ENCODE measurements at regions of chr17 and their contacts with region 1.

Region 1: DNA sequence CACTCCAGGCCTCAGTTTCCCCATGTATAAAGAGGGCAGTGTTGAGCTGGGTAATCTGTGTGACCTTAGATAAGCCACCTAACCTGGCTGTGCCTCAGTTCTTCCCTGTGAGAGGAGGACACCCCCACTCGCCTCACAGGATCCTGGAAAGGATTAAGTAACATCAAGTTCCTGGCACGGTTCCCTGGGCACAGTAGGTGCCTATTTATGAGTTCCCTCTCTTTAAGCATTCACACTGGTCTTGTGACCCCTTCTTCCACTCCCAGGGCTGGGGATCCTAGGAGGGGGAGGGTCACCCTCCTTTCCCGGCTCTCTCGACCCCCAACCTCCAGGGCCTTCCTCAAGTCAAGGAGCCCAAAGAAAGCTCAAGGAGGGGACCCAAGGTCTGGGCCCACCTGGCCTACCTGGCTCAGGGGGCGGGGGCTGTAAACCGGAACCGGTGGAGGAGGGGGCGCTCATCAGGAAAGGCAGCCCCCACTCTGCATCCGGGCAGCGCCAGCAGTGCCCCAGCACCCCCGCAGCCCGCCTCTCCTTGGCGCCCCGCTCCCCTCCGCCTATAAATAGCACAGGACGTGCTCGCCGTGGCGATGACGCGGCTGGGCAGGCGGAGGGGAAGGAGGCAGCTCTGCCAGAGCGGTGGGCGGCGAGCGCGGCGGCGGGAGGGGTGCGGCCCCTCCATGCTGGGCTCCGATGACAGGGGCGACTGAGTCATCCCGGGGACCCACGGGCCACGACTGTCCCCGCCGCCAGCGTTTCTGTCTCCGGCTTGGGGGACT is 9.4 kb downstream of the RPL19 start:
- DNase-seq: peak in 1 of 2 experiments; percentile 76
- H3K4me3 ChIP-seq: peak overlapping the region; percentile 27 to 62 (median 50)
- H3K27ac ChIP-seq: no peak overlapping the region
- H3K4me1 ChIP-seq: peaks cover 5 to 32% (median 24%) of the 10 kb centered on the region in 4 experiments
- H3K27me3 ChIP-seq: peaks cover 0 to 4% (median 2%) of the 10 kb centered on the region in 4 experiments; a peak in 3 of 7 replicates
- CTCF ChIP-seq: no peak
- EP300 ChIP-seq: no peak
- POLR2A ChIP-seq: 0 out of 3 replicates have a peak, but pooled peaks of 1 of the 2 experiments have one; percentile 50
- RAD21 ChIP-seq: no peak

Region 2: GRCh38 chr17:39194089-39194984 is 15.2 kb before region 1 on chr17:
- CTCF ChIA-PET with region 1: interaction called, 13 read pairs
- POLR2A ChIA-PET with region 1: interaction called, 51 read pairs
- DNase-seq: peak in 1 of 2 experiments; percentile 65
- H3K4me3 ChIP-seq: peak overlapping the region in 2 of 4 experiments; percentile 8 to 89; a peak in 4 of 8 replicates
- H3K27ac ChIP-seq: 0 out of 2 replicates have a peak overlapping the region, but pooled peaks have one; percentile 32
- H3K4me1 ChIP-seq: peaks cover 4 to 27% (median 22%) of the 10 kb centered on the region in 4 experiments
- H3K27me3 ChIP-seq: no peaks in the 10 kb centered on the region
- CTCF ChIP-seq: peak; percentile 34 to 58 (median 57)
- EP300 ChIP-seq: no peak
- POLR2A ChIP-seq: no peak
- RAD21 ChIP-seq: peak in 1 of 2 experiments; percentile 36; a peak in 1 of 4 replicates

Region 3: GRCh38 chr17:39219647-39220154 is 10.2 kb after region 1 on chr17:
- CTCF ChIA-PET with region 1: interaction called, 27 read pairs
- POLR2A ChIA-PET with region 1: interaction called, 92 read pairs
- DNase-seq: no peak
- H3K4me3 ChIP-seq: no peak overlapping the region
- H3K27ac ChIP-seq: no peak overlapping the region
- H3K4me1 ChIP-seq: peaks cover 0 to 15% (median 9%) of the 10 kb centered on the region in 4 experiments; a peak in 5 of 7 replicates
- H3K27me3 ChIP-seq: peaks cover 6 to 35% (median 27%) of the 10 kb centered on the region in 4 experiments
- CTCF ChIP-seq: no peak
- EP300 ChIP-seq: no peak
- POLR2A ChIP-seq: no peak
- RAD21 ChIP-seq: no peak

Region 4: DNA sequence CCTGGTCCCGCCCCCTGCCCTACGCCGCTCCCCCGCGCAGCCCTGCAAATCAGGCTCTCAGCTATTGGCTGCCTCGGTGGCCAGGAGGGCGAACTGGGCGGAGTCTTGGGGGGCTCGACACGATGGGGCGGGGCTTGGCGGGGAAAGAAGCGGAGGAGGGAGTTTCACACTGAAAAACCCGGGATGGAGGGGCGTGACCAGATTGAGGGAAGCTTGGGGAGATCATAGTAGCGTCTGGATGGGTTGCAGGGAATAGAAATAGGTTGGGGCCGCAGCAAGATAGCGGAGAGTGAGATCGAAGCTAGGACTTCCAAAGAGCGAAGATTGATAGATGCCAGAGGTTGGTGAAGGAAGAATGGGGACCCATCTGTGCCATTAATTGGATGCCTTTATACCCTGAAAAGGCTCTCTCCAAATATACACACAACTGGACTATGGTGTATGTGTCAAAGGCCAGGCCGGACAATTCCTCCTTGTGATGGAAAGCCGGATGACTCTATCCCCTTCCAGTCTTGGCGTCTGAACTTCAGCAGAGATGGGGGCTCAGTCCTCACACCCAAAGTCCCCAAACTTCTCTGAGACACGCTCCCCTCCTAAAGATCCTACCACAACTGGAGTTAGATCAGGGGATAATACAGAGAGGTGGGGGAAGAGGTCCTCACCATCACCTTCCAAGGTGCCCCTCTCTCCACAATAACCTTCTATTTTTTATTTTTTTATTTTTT is 16.6 kb after region 1 on chr17:
- CTCF ChIA-PET with region 1: interaction called, 982 read pairs
- POLR2A ChIA-PET with region 1: interaction called, 92 read pairs
- DNase-seq: peak; percentile 81 to 98
- H3K4me3 ChIP-seq: peak overlapping the region in 3 of 4 experiments; percentile 11 to 73 (median 31); a peak in 5 of 8 replicates
- H3K27ac ChIP-seq: no peak overlapping the region
- H3K4me1 ChIP-seq: peaks cover 0 to 16% (median 7%) of the 10 kb centered on the region in 4 experiments; a peak in 6 of 7 replicates
- H3K27me3 ChIP-seq: peaks cover 13 to 30% (median 26%) of the 10 kb centered on the region in 4 experiments; a peak in 6 of 7 replicates
- CTCF ChIP-seq: no peak
- EP300 ChIP-seq: no peak
- POLR2A ChIP-seq: no peak
- RAD21 ChIP-seq: no peak

Region 5: DNA sequence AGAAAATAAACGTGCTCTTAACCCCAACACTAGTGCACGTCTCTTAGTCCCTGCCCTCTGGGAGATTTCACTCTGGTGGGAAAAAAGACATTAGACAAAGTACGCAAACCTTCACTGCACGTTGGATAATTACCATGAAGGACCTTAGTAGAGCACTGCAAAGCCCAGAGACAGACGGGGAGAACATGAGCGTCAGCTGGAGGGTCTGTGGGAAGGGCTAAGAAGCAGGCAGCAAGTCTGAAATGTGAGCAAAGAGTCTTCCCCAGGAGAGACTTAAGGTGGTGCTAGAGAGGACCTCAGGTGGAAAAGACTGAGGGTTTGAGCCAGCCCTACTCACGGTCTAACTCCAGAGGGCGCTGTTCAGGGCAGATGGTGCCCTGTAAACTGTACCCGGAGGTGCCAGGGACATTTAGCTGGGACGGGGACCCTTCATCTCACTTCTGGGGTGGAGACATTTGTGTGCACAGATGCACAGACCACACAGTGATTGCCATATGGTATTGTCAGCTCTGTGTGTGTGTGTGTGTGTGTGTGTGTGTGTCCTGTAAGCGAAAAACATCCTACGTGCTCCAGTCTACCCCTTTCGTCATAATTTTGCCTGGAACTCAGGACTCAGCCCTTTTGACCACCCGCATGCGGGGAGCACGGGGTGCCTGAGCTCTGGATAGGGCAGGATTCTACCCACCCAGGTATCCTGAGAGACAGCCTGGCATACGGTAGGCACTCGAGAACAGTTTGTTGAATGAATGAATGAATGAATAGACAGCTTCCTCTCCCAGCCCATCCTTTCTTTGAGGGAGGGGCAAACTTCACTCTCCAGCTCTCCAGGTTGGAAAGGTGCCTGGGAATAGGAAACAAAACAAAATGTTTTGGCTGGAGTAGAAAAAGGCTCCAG is 26.3 kb after region 1 on chr17:
- CTCF ChIA-PET with region 1: interaction called, 982 read pairs
- POLR2A ChIA-PET with region 1: interaction called, 29 read pairs
- DNase-seq: peak; percentile 49 to 84
- H3K4me3 ChIP-seq: no peak overlapping the region
- H3K27ac ChIP-seq: no peak overlapping the region
- H3K4me1 ChIP-seq: peaks cover 0 to 14% (median 10%) of the 10 kb centered on the region in 4 experiments; a peak in 6 of 7 replicates
- H3K27me3 ChIP-seq: no peaks in the 10 kb centered on the region
- CTCF ChIP-seq: peak; percentile 94 to 100 (median 99)
- EP300 ChIP-seq: no peak
- POLR2A ChIP-seq: no peak
- RAD21 ChIP-seq: peak; percentile 45; a peak in 3 of 4 replicates

Region 6: DNA sequence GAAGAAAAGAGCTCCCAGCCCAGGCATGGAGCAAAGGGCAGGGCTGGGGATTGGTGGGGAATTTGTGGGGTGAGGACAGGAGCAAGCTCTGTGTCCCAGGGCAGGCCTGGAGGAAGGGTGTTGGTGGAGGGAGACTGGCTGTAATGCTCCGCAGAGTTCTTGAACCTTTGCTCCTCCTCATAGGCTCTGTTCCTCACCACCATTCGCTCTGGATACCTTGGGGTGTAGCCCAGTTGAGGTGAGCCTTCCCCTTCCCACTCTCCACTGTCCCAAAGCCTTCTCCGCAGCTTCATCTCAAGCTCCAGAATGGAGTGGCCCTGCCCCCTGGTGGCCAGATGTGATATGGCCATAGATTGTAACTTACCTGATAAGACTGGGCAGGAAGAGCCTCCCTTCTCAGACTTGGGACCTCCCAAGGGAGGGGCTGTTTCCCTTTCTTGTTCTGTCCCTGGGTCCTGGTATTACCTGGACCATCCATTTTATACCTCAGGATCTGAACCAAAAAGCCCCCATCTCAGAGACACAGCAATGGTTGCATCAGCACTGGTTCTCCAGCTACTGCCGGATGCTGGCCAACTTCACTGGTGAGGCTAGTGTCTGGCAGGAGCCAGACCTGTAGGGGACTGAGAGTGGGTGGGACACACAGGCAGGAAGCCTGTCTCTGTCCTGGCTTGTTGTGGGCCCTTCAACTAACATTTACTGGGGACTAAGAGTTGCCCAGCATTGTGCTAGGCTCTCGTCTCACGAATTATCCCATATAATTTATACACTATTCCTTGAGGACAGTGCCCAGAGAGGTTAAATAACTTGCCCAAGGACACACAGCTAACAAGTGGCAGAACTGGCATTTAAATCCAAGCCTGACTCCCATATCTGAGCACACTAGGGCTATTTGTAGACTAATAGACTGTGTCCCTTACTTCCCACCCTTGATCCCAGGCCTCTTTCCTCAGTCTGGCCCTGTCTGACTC is 35.4 kb after region 1 on chr17:
- CTCF ChIA-PET with region 1: interaction called, 982 read pairs
- POLR2A ChIA-PET with region 1: interaction called, 113 read pairs
- DNase-seq: peak; percentile 93 to 99
- H3K4me3 ChIP-seq: no peak overlapping the region
- H3K27ac ChIP-seq: no peak overlapping the region
- H3K4me1 ChIP-seq: peaks cover 0 to 9% (median 5%) of the 10 kb centered on the region in 4 experiments; a peak in 6 of 7 replicates
- H3K27me3 ChIP-seq: no peaks in the 10 kb centered on the region
- CTCF ChIP-seq: peak; percentile 83 to 99 (median 93)
- EP300 ChIP-seq: no peak
- POLR2A ChIP-seq: no peak
- RAD21 ChIP-seq: peak; percentile 94 to 96

Region 7: GRCh38 chr17:39252788-39253460 is 43.4 kb after region 1 on chr17:
- CTCF ChIA-PET with region 1: interaction called, 982 read pairs
- POLR2A ChIA-PET with region 1: interaction called, 113 read pairs
- DNase-seq: no peak
- H3K4me3 ChIP-seq: no peak overlapping the region
- H3K27ac ChIP-seq: no peak overlapping the region
- H3K4me1 ChIP-seq: 0 out of 7 replicates have a peak, but pooled peaks cover 0 to 3% (median 0%) of the 10 kb centered on the region in 4 experiments
- H3K27me3 ChIP-seq: no peaks in the 10 kb centered on the region; a peak in 1 of 7 replicates
- CTCF ChIP-seq: no peak
- EP300 ChIP-seq: no peak
- POLR2A ChIP-seq: no peak
- RAD21 ChIP-seq: no peak

Region 8: DNA sequence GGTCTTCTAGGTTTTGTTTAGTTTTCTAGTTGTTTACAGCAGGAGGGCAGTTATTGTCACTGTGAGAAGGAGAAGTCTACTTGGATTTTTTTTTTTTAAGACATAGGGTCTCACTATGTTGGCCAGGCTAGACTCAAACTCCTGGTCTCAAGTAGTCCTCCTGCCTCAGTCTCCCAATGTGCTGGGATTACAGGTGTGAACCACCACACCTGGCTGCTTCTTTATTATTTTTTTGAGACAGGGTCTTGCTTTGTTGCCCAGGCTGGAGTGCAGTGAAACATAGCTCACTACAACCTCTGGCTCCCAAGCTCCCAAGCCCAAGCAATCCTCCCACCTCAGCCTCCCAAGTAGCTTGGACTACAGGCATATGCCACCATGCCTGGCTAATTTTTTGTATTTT is 84.6 kb after region 1 on chr17:
- CTCF ChIA-PET with region 1: no interaction called
- POLR2A ChIA-PET with region 1: no interaction called
- DNase-seq: no peak
- H3K4me3 ChIP-seq: no peak overlapping the region
- H3K27ac ChIP-seq: no peak overlapping the region
- H3K4me1 ChIP-seq: no peaks in the 10 kb centered on the region
- H3K27me3 ChIP-seq: no peaks in the 10 kb centered on the region
- CTCF ChIP-seq: no peak
- EP300 ChIP-seq: no peak
- POLR2A ChIP-seq: no peak
- RAD21 ChIP-seq: no peak

Measured in H1 (cell line).